ENCODE measurements at regions of chr17 and their contacts with region 1.

Region 1: GRCh38 chr17:13594762-13595598 is 6.7 kb downstream of the HS3ST3A1 start:
- DNase-seq: peak; percentile 69
- ATAC-seq: peak; percentile 50 to 73

Region 2: GRCh38 chr17:14069251-14070021 is 474.5 kb after region 1 on chr17 and contains the start of gene COX10:
- intact Hi-C with region 1: loop called in 1 of 2 experiments (anchors 5 kb)
- DNase-seq: peak; percentile 90
- ATAC-seq: peak; percentile 99 to 100
- total RNA-seq, gene COX10: 24.2 to 29.7 TPM

Region 3: GRCh38 chr17:14300575-14301278 is 705.7 kb after region 1 on chr17 and contains the start of gene HS3ST3B1:
- intact Hi-C with region 1: loop called (anchors 1 to 5 kb)
- DNase-seq: peak; percentile 96
- ATAC-seq: peak; percentile 92 to 94
- total RNA-seq, gene HS3ST3B1: 0.82 to 1.3 TPM

Region 4: DNA sequence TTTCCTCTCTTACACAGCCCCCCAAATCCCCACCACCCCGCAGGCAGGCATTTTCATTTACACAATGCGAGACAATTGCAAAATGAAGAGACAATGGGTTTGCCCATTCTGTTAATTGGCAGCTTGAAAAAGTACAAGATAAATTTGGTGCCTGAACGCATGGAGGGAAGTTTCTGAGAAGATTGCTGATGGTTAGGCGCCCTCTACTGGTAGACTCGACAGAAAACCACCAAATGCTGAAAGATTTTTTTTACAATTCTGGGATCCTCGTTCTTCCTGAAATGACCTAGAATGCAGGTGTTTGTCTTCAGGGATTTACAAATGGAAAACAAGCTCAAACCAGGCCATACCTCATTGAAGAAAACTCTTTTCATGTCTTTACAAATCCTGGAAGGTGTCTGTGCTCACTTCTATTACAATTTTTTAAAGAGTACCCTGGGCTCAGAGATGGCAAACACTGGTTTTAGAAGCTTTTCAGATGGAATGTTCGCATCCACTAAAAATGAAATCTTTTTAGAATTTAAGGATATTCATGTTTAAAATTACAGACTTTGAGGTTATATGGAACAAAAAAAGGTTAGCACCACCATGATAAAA is 1331.6 kb after region 1 on chr17:
- intact Hi-C with region 1: loop called in 1 of 2 experiments (anchors 2 kb)
- DNase-seq: peak; percentile 35
- ATAC-seq: no peak

Measured in left cardiac atrium (tissue), 4 donors.